ENCODE measurements at regions of chr20 and their contacts with region 1.

Region 1: DNA sequence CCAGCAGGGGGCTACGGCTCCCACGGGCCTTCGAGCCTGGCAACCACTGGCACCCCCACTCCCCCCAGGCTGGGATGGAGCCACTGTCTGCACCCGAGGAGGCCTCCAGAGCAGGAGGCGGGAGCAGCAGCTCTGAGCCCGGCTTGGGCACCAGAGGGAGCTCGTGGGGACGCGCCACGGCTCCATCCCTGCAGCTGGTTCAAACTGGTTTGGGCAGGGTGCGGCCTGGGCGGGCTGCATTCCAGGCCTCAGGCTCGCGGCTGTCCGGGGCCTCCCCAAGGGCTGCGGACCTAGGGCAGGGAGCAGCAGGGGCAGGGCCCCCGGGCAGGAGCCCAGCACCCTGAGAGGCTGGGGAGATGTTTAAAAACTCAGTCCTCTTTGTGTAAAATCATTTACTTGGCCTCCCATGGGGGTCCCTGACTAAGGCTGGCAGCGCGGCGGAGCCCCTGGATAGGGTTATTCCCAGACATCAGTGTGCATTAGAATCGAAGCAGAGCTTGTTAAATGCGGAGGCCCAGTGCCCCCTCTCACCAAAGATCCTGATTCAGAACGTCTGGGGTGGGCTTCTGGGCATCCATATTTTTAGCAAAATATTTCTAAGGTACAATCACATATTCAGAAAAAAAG is 4.1 kb upstream of the BCAS4 start:
- DNase-seq: peak; percentile 91
- ATAC-seq: peak; percentile 70
- H3K4me3 Mint-ChIP-seq: no peak overlapping the region
- H3K27ac Mint-ChIP-seq: peak overlapping the region; percentile 83
- H3K4me1 Mint-ChIP-seq: peaks cover 18% of the 10 kb centered on the region
- H3K27me3 Mint-ChIP-seq: no peaks in the 10 kb centered on the region

Region 2: DNA sequence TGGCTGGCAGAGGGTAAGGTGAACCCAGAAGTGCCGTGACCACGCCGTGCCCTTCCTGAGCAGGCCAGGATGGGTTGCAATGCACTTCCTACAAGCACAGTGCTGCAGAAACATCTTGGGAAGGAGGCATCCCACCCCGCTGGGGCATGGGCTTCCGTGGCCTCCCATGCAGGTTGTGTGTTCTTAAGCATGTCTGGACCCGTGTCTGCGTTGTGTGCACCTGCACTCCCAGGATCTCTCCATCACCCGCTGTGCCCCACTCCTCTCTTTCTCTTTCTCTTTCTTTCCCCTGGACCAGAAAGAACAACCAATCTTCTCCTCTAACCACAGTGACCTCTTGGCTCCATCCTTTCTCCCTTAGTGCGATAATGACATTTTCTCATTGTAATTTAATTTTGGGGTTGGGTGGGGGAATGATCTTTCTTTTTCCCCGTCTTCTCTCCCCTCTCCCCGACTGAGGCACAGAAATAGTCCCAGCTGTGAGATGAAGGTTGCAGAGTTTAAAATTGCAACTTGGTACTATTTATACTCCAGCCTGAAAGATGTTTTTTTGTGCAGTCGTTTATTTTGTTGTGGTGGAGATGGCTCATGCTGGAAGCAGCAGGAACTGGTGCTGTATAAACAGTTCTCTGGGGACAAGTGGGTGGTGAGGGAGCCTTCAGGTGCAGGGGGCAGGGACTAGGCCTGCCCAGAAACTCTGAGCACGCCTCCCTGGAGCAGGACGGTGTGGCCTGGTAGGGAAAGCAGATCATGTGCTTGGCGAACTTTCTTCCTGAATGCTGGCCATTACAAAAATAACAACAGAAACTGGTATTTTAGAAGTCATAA is 24.6 kb after region 1 on chr20:
- CTCF ChIA-PET with region 1: interaction called, 90 read pairs
- DNase-seq: no peak
- ATAC-seq: peak; percentile 13
- H3K4me3 Mint-ChIP-seq: peak overlapping the region; percentile 71
- H3K27ac Mint-ChIP-seq: peak overlapping the region; percentile 85
- H3K4me1 Mint-ChIP-seq: peaks cover 64% of the 10 kb centered on the region
- H3K27me3 Mint-ChIP-seq: no peaks in the 10 kb centered on the region

Region 3: DNA sequence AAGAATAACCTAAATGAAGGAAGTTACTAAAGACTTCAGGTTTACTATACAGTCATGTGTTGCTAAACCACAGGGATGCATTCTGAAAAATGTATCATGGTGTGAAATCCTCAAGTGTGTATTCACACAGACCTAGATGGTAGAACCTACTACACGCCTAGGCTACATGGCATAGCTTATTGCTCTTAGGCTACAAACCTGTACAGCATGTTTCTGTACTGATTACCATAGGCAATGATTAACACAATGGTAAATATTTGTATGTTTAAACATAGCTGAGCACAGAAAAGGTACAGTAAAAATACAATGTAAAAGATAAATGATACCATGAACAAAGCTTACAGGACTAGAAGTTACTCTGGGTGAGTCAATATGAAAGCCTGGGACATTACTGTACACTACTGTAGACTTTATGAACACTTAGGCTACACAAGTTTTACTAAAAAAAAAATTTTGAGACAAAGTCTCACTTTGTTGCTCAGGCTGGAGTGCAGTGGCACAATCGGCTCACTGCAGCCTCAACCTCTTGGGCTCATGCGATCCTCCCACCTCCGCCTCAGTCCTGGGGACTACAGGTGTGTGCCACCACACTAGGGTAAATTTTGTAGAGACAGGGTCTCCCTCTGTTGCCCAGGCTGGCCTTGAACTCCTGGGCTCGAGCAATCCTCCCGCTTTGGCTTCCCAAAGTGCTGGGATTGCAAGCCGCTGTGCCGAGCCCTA is 104.5 kb after region 1 on chr20:
- CTCF ChIA-PET with region 1: interaction called, 20 read pairs
- DNase-seq: no peak
- ATAC-seq: no peak
- H3K4me3 Mint-ChIP-seq: no peak overlapping the region
- H3K27ac Mint-ChIP-seq: no peak overlapping the region
- H3K4me1 Mint-ChIP-seq: peaks cover 49% of the 10 kb centered on the region
- H3K27me3 Mint-ChIP-seq: no peaks in the 10 kb centered on the region

Region 4: DNA sequence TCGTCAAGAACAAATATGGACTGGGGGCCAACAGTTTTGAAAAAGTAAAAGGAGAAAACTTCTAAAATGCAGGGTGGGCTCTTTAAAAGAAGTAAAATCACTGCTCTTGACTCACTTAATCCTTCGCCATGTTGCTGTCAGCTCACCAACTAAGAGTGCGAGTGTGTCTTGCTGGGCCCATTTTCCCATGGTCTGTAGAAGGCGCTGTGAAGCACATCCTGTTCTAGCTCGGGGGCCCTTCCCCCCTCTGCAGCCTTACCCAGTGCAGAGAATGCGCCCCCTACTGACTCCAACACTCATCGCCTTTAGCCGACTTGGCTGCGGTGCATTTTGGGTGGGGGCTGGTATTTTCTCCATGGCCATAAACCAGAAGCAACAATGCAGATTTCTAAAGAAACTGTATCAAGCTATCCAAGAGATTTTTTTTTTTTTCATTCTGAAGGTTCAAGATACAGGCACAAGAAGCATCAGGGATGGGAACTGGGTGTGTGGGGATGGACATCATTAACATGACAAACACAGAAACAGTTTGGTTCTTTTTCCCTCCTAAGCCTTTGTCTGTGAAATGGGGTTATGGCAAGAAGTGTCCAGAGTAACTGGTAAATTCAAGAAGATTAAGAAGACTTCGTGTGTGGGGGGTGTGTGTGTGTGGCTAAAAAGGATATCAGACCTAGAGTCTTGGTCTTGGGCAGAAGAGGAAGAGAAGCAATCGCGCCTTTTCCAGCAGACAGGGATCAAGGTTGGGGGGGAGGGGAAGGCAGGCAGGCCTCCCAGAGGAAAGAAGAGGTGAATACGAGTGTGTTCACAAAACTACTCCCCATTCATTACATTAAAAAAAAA is 138.8 kb after region 1 on chr20:
- CTCF ChIA-PET with region 1: interaction called, 350 read pairs
- DNase-seq: peak; percentile 98
- ATAC-seq: peak; percentile 71
- H3K4me3 Mint-ChIP-seq: peak overlapping the region; percentile 95
- H3K27ac Mint-ChIP-seq: peak overlapping the region; percentile 95
- H3K4me1 Mint-ChIP-seq: peaks cover 53% of the 10 kb centered on the region
- H3K27me3 Mint-ChIP-seq: no peaks in the 10 kb centered on the region

Region 5: DNA sequence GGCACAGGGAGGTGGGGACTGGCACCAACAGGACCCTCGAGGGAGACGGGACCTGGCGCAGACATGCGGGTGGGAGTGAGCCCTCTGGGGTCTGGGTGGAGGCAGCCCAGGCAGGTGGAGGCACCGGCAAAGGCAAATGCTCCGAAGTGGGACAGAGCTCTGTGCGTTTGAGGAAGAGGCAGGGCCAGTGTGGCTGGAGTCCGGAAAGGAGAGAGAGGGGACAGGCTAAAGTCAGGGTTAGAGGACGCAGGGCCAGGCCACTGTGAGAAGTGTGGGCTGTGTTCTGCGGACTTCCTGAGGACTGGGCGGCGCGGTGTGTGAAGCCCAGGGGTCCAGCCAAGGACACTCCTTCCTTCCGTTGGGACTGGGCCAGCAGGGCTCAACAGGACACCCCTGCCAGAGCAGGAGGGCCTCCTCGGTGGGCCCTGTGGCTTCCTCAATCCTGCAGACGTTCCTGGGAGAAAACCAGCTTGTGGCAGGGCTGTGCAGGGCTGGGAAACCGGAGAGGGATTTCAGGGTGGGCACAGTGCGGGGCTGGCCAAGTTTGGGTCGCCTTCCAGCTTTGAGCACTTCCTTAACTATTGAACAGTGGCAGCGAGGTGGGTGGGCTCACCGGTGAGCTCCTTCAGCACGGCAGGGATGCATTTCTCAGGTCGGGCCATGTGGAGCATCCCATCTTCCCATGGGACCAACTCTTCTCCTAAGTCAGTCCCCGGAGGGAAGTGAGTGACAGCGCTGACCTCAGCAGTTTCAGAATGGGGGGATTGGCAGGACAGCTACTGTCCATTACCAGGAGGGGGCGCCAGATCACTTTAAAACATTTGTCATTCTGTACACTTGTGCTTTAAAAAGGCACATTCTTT is 190.3 kb after region 1 on chr20:
- CTCF ChIA-PET with region 1: interaction called, 37 read pairs
- DNase-seq: peak; percentile 77
- ATAC-seq: peak; percentile 74
- H3K4me3 Mint-ChIP-seq: no peak overlapping the region
- H3K27ac Mint-ChIP-seq: no peak overlapping the region
- H3K4me1 Mint-ChIP-seq: peaks cover 8% of the 10 kb centered on the region
- H3K27me3 Mint-ChIP-seq: peaks cover 40% of the 10 kb centered on the region

Region 6: DNA sequence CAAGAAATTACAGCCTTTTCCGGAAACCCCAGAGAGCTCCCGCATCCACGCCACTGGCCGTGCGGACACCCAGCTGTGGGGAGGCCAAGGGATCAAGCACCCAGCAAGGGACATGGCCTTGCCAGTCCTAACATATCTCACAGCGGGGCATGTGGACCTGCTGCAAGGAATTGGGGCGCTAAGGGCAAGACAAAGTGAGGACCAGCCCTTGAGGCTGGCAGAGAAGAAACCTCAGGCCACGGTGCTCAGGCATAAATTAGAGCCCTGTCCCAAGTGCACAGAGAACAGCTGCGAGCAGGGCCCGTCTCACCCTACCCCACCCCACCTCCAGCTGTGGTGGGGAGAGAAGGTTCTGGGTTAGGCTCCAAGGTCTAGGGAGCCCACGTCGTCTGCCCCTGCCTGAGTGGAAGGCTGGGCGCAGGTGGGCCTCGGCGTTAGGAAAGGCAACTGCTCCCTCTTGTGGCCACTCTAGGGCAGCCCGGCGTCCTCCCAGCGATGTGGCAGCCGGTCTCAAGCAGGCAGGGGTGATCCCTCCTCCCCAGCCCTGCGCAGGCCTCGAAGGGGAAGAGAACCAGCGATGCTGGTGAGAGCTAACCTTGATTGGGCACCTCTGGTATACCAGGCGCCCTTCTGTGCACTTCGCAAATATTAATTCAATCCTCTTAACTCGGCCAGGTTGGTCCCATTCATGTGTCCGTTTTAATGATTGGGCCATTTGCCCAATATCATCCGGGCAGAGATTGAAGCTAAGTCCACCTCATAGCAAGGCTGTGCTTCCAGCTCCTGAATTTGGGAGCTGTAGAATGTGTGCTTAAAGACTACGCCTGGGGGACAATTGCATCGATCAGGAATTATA is 516.0 kb after region 1 on chr20:
- CTCF ChIA-PET with region 1: interaction called, 13 read pairs
- DNase-seq: peak; percentile 76
- ATAC-seq: peak; percentile 96
- H3K4me3 Mint-ChIP-seq: no peak overlapping the region
- H3K27ac Mint-ChIP-seq: no peak overlapping the region
- H3K4me1 Mint-ChIP-seq: peaks cover 3% of the 10 kb centered on the region
- H3K27me3 Mint-ChIP-seq: peaks cover 30% of the 10 kb centered on the region

Measured in activated CD8-positive, alpha-beta memory T cell treated with anti-CD3 and anti-CD28 coated beads, Interleukin-2, amount 10 ng/mL, durations not matched to agents 7 days and 5 days (primary cell).